ENCODE measurements at regions of chr6 and their contacts with region 1.

Region 1: GRCh38 chr6:1187293-1188131 is 124.4 kb upstream of the FOXQ1 start:
- DNase-seq: no peak
- CTCF ChIP-seq: no peak

Region 2: DNA sequence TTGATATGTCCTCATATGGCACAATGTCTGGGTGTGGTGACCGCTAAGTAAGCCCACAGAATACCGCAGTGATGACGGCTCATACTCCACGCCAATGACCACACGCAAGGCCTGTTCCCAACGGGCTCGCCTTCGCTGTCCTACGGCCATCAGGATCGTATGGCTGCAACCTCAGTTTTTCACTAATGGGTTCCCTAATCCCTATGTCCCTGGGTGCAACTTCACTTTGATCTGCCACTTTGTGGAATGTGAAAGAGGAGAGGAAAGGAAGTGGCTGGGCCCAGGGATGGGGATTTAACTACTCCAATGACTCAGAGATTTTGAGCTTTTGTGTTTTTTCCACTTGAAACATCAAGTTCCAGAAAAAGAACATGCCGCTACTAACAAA is 13.2 kb after region 1 on chr6:
- CTCF ChIA-PET with region 1: interaction called, 10 read pairs
- POLR2A ChIA-PET with region 1: no interaction called
- DNase-seq: no peak
- CTCF ChIP-seq: no peak